MCF 10A (cell line): ENCODE measurements at regions of chr11 and their contacts with region 1.

Region 1: DNA sequence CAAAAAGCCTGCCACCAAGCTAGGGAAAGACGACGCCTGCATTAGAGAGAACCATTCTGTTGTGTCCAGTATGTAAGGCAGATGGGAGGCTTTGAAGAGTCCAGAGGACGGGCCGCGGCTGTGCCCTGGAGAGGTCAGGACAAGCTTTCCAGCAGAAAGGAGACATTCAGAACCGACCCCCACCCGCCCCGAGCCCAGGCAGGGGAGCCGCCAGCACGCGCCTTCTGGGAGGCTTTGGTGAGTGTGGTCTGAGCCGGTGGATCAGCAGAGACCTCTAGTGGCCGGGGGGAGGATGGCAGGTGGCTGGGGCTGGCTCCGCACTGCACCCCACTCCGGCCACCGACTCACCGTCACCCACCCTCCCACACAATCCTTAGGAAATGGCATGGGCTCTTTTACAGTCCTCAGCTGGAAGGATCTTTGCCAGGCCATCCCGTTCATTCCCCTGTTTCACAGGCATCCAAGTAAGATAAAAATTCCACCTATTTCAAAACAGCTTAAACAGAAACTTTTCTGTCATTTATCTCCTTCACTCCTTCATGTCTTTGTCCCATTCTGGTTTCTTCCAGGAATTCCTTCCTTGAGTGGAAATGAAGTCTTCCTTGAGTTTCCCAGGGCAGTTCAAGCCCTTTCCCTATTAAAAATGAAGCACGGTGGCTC is 91.2 kb downstream of the FEZ1 start:
- DNase-seq: peak; percentile 55
- H3K4me3 Mint-ChIP-seq: no peak overlapping the region
- H3K27ac Mint-ChIP-seq: no peak overlapping the region
- H3K4me1 Mint-ChIP-seq: peaks cover 6% of the 10 kb centered on the region
- H3K27me3 Mint-ChIP-seq: peaks cover 85% of the 10 kb centered on the region
- CTCF ChIP-seq: peak; percentile 92

Region 2: DNA sequence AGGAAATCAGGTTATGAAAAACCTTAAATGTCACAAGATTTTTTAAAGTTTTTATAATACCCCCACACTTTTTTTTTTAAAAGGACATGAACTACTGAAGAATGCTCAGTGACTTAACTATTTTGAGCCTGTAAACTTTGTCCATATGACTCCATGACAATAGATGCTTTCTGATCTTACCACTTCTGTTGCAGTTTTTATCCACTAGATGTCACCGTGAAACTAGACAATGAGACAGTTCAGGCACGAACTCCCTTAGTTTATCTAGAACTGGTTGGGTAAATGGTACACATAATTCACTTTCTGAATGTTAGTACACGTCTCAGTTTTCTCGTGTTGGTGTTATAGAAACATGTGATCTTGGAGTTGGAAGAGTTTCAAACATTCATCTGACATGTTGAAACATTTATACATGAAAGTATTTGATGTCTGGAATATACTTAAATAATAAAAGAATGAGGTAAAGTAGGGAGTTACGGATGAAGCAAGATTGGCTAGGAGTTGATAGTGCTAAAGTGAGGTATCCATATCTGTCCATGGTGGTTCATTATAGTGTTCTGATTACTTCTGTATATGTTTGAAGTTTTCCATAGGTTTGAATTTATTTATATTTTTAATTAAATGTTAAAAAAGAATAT is 442.8 kb before region 1 on chr11:
- CTCF ChIA-PET with region 1: interaction called, 4 read pairs
- POLR2A ChIA-PET with region 1: interaction called, 3 read pairs
- intact Hi-C with region 1: loop called (anchors 1 kb)
- DNase-seq: peak; percentile 85
- H3K4me3 Mint-ChIP-seq: no peak overlapping the region
- H3K27ac Mint-ChIP-seq: no peak overlapping the region
- H3K4me1 Mint-ChIP-seq: no peaks in the 10 kb centered on the region
- H3K27me3 Mint-ChIP-seq: no peaks in the 10 kb centered on the region
- CTCF ChIP-seq: peak; percentile 69

Region 3: DNA sequence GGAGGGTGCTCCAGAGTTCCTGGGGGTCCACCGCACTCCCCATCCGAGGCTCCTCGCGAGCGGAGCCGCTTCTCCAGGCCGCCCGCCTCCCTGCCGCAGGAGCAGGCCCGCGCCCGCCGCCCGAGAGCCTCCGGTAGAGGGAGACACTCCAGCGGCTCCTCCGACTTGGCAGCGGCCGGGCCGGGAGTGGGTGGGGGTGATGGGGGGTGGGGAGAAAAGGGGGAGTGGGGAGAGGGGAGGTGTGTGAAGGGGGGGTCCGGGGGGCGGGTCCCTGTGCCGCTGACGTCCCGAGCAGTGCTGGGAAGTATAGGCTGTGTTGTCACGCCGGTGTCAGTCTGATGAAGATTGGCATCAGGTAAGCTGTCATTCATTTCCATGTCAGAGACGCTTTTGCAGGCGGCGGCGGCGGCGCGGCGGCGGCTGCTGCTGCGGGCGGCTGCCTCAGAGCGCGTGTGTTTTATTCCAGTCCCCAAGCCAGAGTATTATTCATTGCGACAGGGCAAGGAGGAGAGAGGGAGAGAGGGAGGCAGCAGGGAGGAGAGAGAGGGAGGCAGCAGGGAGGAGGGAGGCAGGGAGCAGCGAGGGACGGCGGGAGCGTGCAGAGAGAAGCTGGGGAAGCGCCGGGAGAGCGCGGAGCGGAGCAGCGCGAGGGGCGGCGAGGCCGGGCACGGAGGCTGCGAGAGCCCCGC is 240.3 kb before region 1 on chr11 and contains the start of gene PKNOX2:
- CTCF ChIA-PET with region 1: interaction called, 18 read pairs
- POLR2A ChIA-PET with region 1: no interaction called
- intact Hi-C with region 1: loop called (anchors 1 kb)
- DNase-seq: peak; percentile 57
- H3K4me3 Mint-ChIP-seq: peak within 1 kb of the TSS; percentile 92
- H3K27ac Mint-ChIP-seq: no peak within 1 kb of the TSS
- H3K4me1 Mint-ChIP-seq: peaks cover 6% of the 10 kb centered on the region
- H3K27me3 Mint-ChIP-seq: peaks cover 16% of the 10 kb centered on the region
- CTCF ChIP-seq: peak; percentile 46
- total RNA-seq, gene PKNOX2: not detected in 2 replicates

Region 4: DNA sequence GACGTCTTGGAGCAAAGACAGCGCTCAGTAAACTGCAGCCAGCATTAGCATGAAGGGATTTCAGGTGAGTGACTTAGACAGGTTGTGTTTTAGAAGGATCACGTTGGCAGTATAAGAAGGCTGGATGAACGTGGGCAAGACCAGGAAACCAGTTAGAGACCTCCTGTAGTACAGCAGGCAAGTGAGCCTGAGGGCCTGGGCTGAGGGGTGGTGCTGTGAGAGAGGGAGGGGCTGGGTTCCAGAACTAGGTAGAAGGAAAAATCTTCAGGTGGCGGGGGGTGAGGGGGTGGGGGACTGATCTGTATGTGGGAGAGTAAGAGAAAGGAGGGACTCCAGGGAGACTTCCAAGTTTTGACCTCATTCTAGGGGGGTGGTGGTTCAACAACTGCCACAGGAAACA is 198.2 kb before region 1 on chr11:
- CTCF ChIA-PET with region 1: no interaction called
- POLR2A ChIA-PET with region 1: no interaction called
- intact Hi-C with region 1: no loop called
- DNase-seq: no peak
- H3K4me3 Mint-ChIP-seq: no peak overlapping the region
- H3K27ac Mint-ChIP-seq: no peak overlapping the region
- H3K4me1 Mint-ChIP-seq: no peaks in the 10 kb centered on the region
- H3K27me3 Mint-ChIP-seq: no peaks in the 10 kb centered on the region
- CTCF ChIP-seq: no peak

Region 5: DNA sequence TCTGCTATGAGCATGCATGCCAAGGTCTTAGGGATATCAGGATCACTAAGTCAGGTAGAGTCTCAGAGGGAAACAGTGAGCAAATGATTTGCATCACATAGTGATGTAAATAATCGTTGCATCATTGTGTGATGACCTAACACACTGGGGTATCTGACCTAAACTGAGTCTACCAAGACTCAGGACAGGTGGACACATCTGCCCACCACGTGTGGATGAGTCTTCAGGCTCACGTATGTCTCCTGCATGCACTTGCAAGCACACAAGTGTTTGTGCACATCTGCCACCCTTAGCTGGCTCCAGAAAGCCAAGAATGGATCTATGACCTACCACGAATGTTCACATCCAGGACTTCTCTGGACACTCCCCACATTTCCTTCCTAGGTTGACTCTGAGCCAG is 20.1 kb before region 1 on chr11:
- CTCF ChIA-PET with region 1: interaction called, 17 read pairs
- POLR2A ChIA-PET with region 1: no interaction called
- intact Hi-C with region 1: no loop called
- DNase-seq: no peak
- H3K4me3 Mint-ChIP-seq: no peak overlapping the region
- H3K27ac Mint-ChIP-seq: no peak overlapping the region
- H3K4me1 Mint-ChIP-seq: peaks cover 6% of the 10 kb centered on the region
- H3K27me3 Mint-ChIP-seq: peaks cover 48% of the 10 kb centered on the region
- CTCF ChIP-seq: no peak

Region 6: DNA sequence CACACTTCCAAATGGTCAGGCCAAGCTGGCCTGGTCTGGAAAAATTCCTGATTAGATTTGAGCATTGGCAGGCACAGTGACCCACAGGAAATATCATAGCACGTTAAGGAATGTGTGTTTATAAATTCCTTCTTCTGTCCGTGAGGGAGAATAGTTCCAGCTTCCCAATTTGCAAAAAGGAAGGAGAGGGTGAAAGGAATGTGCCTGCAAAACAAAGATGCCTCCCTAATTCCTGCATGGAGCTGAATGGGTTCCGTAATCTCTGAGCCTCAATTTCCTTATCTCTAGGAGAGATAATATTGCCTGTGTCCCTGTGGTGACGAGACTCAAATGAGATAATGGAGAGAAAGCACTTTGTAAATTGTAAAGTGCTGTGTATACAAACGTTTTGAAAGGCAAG is 14.0 kb before region 1 on chr11:
- CTCF ChIA-PET with region 1: interaction called, 17 read pairs
- POLR2A ChIA-PET with region 1: interaction called, 3 read pairs
- intact Hi-C with region 1: no loop called
- DNase-seq: no peak
- H3K4me3 Mint-ChIP-seq: no peak overlapping the region
- H3K27ac Mint-ChIP-seq: no peak overlapping the region
- H3K4me1 Mint-ChIP-seq: no peaks in the 10 kb centered on the region
- H3K27me3 Mint-ChIP-seq: peaks cover 65% of the 10 kb centered on the region
- CTCF ChIP-seq: no peak

Region 7: GRCh38 chr11:125423247-125423849 is 18.4 kb after region 1 on chr11:
- CTCF ChIA-PET with region 1: interaction called, 16 read pairs
- POLR2A ChIA-PET with region 1: no interaction called
- intact Hi-C with region 1: no loop called
- DNase-seq: peak; percentile 28
- H3K4me3 Mint-ChIP-seq: no peak overlapping the region
- H3K27ac Mint-ChIP-seq: no peak overlapping the region
- H3K4me1 Mint-ChIP-seq: no peaks in the 10 kb centered on the region
- H3K27me3 Mint-ChIP-seq: peaks cover 49% of the 10 kb centered on the region
- CTCF ChIP-seq: peak; percentile 37

Region 8: GRCh38 chr11:125489166-125489565 is 84.3 kb after region 1 on chr11:
- CTCF ChIA-PET with region 1: no interaction called
- POLR2A ChIA-PET with region 1: no interaction called
- intact Hi-C with region 1: no loop called
- DNase-seq: no peak
- H3K4me3 Mint-ChIP-seq: no peak overlapping the region
- H3K27ac Mint-ChIP-seq: no peak overlapping the region
- H3K4me1 Mint-ChIP-seq: no peaks in the 10 kb centered on the region
- H3K27me3 Mint-ChIP-seq: no peaks in the 10 kb centered on the region
- CTCF ChIP-seq: no peak